H1 (cell line): ENCODE measurements at regions of chr4 and their contacts with region 1.

Region 1: GRCh38 chr4:87375719-87376291 is 15.2 kb downstream of the HSD17B11 start:
- DNase-seq: no peak
- H3K4me3 ChIP-seq: no peak overlapping the region
- H3K27ac ChIP-seq: no peak overlapping the region
- H3K4me1 ChIP-seq: no peaks in the 10 kb centered on the region
- H3K27me3 ChIP-seq: no peaks in the 10 kb centered on the region
- CTCF ChIP-seq: peak in 2 of 3 experiments; percentile 64 to 71; a peak in 3 of 4 replicates
- EP300 ChIP-seq: no peak
- POLR2A ChIP-seq: no peak
- RAD21 ChIP-seq: peak; percentile 75 to 84

Region 2: GRCh38 chr4:87204559-87204958 is 171.2 kb before region 1 on chr4:
- CTCF ChIA-PET with region 1: no interaction called
- POLR2A ChIA-PET with region 1: no interaction called
- DNase-seq: no peak
- H3K4me3 ChIP-seq: no peak overlapping the region
- H3K27ac ChIP-seq: no peak overlapping the region
- H3K4me1 ChIP-seq: no peaks in the 10 kb centered on the region
- H3K27me3 ChIP-seq: no peaks in the 10 kb centered on the region
- CTCF ChIP-seq: no peak
- EP300 ChIP-seq: no peak
- POLR2A ChIP-seq: no peak
- RAD21 ChIP-seq: no peak

Region 3: DNA sequence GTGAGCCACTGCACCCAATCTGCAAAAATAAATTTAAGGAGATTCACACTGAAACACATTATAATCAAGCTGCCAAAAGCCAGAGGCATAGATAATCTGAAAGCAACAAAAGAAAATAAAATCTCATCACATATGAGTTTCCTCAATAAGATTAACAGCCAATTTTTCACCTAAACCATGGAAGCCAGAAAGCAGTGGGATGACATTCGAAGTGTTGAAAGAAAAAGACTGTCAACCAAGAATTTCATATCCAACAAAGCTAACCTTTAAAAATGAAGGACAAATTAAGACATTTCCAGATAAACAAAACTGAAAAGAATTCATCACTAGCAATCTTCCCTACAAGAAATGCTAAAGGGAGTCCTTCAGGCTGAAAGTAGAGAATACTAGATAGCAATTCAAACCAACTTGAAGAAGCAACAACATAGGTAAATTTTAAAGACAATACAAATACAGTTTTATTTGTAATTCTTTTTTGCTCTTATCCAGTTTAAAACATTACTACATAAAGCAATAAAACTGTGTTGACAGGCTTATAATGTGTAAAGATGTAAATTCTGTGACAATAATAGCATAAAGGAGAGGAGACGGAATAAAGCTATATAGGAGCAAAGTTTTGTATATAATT is 132.3 kb before region 1 on chr4:
- CTCF ChIA-PET with region 1: no interaction called
- POLR2A ChIA-PET with region 1: no interaction called
- DNase-seq: no peak
- H3K4me3 ChIP-seq: no peak overlapping the region
- H3K27ac ChIP-seq: no peak overlapping the region
- H3K4me1 ChIP-seq: no peaks in the 10 kb centered on the region
- H3K27me3 ChIP-seq: peaks cover 0 to 1% (median 0%) of the 10 kb centered on the region in 4 experiments; a peak in 1 of 7 replicates
- CTCF ChIP-seq: no peak
- EP300 ChIP-seq: no peak
- POLR2A ChIP-seq: no peak
- RAD21 ChIP-seq: no peak

Region 4: GRCh38 chr4:87363567-87363966 is 12.2 kb before region 1 on chr4:
- CTCF ChIA-PET with region 1: interaction called, 21 read pairs
- POLR2A ChIA-PET with region 1: no interaction called
- DNase-seq: no peak
- H3K4me3 ChIP-seq: no peak overlapping the region
- H3K27ac ChIP-seq: no peak overlapping the region
- H3K4me1 ChIP-seq: peaks cover 0 to 4% (median 0%) of the 10 kb centered on the region in 4 experiments; a peak in 2 of 7 replicates
- H3K27me3 ChIP-seq: no peaks in the 10 kb centered on the region
- CTCF ChIP-seq: no peak
- EP300 ChIP-seq: no peak
- POLR2A ChIP-seq: no peak
- RAD21 ChIP-seq: no peak

Region 5: GRCh38 chr4:87442889-87443288 is 67.1 kb after region 1 on chr4:
- CTCF ChIA-PET with region 1: interaction called, 12 read pairs
- POLR2A ChIA-PET with region 1: no interaction called
- DNase-seq: no peak
- H3K4me3 ChIP-seq: no peak overlapping the region
- H3K27ac ChIP-seq: no peak overlapping the region
- H3K4me1 ChIP-seq: no peaks in the 10 kb centered on the region
- H3K27me3 ChIP-seq: peaks cover 0 to 1% (median 0%) of the 10 kb centered on the region in 4 experiments; a peak in 1 of 7 replicates
- CTCF ChIP-seq: no peak
- EP300 ChIP-seq: no peak
- POLR2A ChIP-seq: no peak
- RAD21 ChIP-seq: no peak

Region 6: DNA sequence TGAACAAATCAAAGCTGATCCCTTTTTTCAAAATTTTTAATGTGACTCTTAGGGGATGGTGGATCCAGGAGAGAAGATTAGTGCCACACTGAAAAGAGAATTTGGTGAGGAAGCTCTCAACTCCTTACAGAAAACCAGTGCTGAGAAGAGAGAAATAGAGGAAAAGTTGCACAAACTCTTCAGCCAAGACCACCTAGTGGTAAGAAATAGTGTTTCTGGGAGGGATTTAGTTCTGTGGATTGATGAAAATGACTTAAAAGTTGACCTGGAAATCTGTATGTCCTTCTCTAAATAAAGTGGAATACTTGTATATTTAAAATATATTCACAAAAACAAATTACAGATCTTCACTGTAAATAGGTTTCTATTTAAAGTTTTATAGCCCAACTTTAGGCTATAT is 75.7 kb after region 1 on chr4:
- CTCF ChIA-PET with region 1: interaction called, 12 read pairs
- POLR2A ChIA-PET with region 1: no interaction called
- DNase-seq: no peak
- H3K4me3 ChIP-seq: no peak overlapping the region
- H3K27ac ChIP-seq: no peak overlapping the region
- H3K4me1 ChIP-seq: no peaks in the 10 kb centered on the region
- H3K27me3 ChIP-seq: no peaks in the 10 kb centered on the region
- CTCF ChIP-seq: peak in 1 of 3 experiments; percentile 9; a peak in 1 of 4 replicates
- EP300 ChIP-seq: no peak
- POLR2A ChIP-seq: no peak
- RAD21 ChIP-seq: no peak

Region 7: DNA sequence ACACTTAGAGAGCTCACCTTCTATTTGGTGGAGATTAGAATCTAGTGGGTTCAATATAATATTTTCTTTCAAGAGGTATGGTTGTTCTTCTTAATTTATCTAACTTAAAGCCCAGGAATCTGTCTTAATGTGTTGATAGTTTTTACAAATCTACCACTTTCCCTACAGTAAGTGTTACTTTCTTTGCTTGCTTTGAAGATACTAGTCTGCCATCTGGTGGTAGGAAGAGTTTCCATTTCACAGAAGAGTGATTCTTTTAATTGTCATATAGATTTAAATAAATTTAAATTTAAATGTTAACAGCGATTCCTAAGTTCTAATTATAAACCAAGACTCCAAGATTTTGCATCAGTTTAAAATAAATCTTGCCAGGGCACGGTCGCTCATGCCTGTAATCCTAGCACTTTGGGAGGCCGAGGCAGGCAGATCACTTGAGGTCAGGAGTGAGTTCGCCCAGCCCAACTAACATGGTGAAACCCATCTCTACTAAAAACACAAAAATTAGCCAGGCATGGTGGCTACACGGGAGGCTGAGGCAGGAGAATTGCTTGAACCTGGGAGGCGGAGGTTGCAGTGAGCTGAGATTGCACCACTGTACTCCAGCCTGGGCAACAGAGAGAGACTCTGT is 90.0 kb after region 1 on chr4:
- CTCF ChIA-PET with region 1: interaction called, 34 read pairs
- POLR2A ChIA-PET with region 1: interaction called, 3 read pairs
- DNase-seq: no peak
- H3K4me3 ChIP-seq: no peak overlapping the region
- H3K27ac ChIP-seq: no peak overlapping the region
- H3K4me1 ChIP-seq: peaks cover 0 to 5% (median 0%) of the 10 kb centered on the region in 4 experiments; a peak in 1 of 7 replicates
- H3K27me3 ChIP-seq: no peaks in the 10 kb centered on the region
- CTCF ChIP-seq: peak in 2 of 3 experiments; percentile 38 to 41; a peak in 2 of 4 replicates
- EP300 ChIP-seq: no peak
- POLR2A ChIP-seq: no peak
- RAD21 ChIP-seq: peak; percentile 60 to 65

Region 8: GRCh38 chr4:87516683-87517082 is 140.9 kb after region 1 on chr4:
- CTCF ChIA-PET with region 1: no interaction called
- POLR2A ChIA-PET with region 1: no interaction called
- DNase-seq: no peak
- H3K4me3 ChIP-seq: no peak overlapping the region
- H3K27ac ChIP-seq: no peak overlapping the region
- H3K4me1 ChIP-seq: peaks cover 2 to 5% (median 4%) of the 10 kb centered on the region in 4 experiments; a peak in 5 of 7 replicates
- H3K27me3 ChIP-seq: no peaks in the 10 kb centered on the region; a peak in 2 of 7 replicates
- CTCF ChIP-seq: no peak
- EP300 ChIP-seq: no peak
- POLR2A ChIP-seq: no peak
- RAD21 ChIP-seq: no peak